AG04449 (cell line): ENCODE measurements at regions of chr12 and their contacts with region 1.

Region 1: GRCh38 chr12:59431266-59431665 is 164.6 kb upstream of the SLC16A7 start:
- DNase-seq: no peak
- H3K4me3 ChIP-seq: no peak overlapping the region
- CTCF ChIP-seq: peak; percentile 6

Region 2: DNA sequence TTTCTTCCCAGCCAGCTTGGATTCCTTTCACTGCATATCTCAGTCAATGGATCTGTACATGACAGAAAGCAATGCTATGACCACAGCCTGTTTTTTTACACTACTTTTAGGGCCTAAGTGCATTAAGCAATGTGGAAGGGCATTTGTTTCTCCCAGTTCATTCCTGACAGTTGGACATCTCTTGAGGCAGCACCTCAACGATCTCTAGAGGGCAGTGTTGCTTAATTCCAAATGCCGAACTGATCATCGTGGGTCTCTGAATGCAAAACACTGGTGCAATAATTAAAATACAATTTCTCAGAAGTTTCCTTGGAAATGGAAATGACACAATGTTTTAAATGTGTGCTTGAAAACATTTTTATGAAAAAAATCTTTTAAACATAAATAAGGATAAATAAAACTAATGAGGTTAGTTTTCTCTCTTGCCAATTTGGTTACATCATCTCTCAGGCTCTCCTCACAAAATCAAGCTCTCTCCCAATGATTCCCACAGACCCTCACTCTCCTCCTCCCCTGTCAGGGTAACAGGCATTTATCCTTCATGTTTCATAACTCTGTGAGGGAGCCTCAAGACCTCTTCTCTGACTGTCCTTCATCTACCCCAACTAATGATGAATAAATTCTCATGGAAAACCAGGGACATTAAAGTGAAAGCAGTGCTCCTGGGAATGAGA is 27.9 kb before region 1 on chr12:
- CTCF ChIA-PET with region 1: interaction called, 11 read pairs
- POLR2A ChIA-PET with region 1: no interaction called
- DNase-seq: no peak
- H3K4me3 ChIP-seq: peak overlapping the region; percentile 19
- CTCF ChIP-seq: peak; percentile 80

Region 3: GRCh38 chr12:59414051-59414450 is 17.2 kb before region 1 on chr12:
- CTCF ChIA-PET with region 1: no interaction called
- POLR2A ChIA-PET with region 1: no interaction called
- DNase-seq: no peak
- H3K4me3 ChIP-seq: no peak overlapping the region
- CTCF ChIP-seq: no peak

Region 4: GRCh38 chr12:59763835-59764234 is 332.6 kb after region 1 on chr12:
- CTCF ChIA-PET with region 1: no interaction called
- POLR2A ChIA-PET with region 1: no interaction called
- DNase-seq: no peak
- H3K4me3 ChIP-seq: no peak overlapping the region
- CTCF ChIP-seq: no peak